CD8-positive, alpha-beta T cell (primary cell): ENCODE measurements at regions of chr15 and their contacts with region 1.

Region 1: GRCh38 chr15:23578521-23579150 is 13.2 kb downstream of the MKRN3 start:
- DNase-seq: no peak
- ATAC-seq: no peak
- H3K4me3 ChIP-seq: no peak overlapping the region
- H3K4me3 Mint-ChIP-seq: no peak overlapping the region
- H3K27ac ChIP-seq: no peak overlapping the region
- H3K27ac Mint-ChIP-seq: no peak overlapping the region
- H3K4me1 ChIP-seq: no peaks in the 10 kb centered on the region
- H3K4me1 Mint-ChIP-seq: no peaks in the 10 kb centered on the region
- H3K27me3 ChIP-seq: no peaks in the 10 kb centered on the region
- H3K27me3 Mint-ChIP-seq: no peaks in the 10 kb centered on the region
- CTCF ChIP-seq: no peak

Region 2: DNA sequence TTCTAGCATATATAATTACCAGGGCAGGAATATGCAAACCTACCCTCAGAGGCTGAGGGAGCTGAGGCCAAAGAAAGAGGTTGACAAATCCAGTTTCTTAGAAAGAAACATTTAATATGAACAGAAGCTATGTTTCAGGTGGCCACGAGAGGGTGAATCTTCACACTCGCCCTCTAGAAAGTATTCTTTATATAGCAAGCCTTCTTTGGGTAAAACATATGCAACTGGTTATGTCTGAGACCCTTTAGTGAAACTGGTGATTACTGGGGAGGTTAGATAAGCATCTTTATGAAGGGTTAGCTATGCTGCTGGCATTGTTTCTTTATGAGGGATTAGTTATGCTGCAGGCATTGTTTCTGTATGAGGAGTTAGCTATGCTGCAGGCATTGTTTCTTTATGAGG is 80.9 kb before region 1 on chr15:
- CTCF ChIA-PET with region 1: no interaction called
- POLR2A ChIA-PET with region 1: no interaction called
- intact Hi-C with region 1: no loop called
- DNase-seq: peak in 2 of 9 experiments; percentile 4 to 17
- ATAC-seq: no peak
- H3K4me3 ChIP-seq: no peak overlapping the region
- H3K4me3 Mint-ChIP-seq: no peak overlapping the region
- H3K27ac ChIP-seq: no peak overlapping the region
- H3K27ac Mint-ChIP-seq: no peak overlapping the region
- H3K4me1 ChIP-seq: no peaks in the 10 kb centered on the region
- H3K4me1 Mint-ChIP-seq: no peaks in the 10 kb centered on the region
- H3K27me3 ChIP-seq: no peaks in the 10 kb centered on the region
- H3K27me3 Mint-ChIP-seq: no peaks in the 10 kb centered on the region
- CTCF ChIP-seq: no peak

Region 3: DNA sequence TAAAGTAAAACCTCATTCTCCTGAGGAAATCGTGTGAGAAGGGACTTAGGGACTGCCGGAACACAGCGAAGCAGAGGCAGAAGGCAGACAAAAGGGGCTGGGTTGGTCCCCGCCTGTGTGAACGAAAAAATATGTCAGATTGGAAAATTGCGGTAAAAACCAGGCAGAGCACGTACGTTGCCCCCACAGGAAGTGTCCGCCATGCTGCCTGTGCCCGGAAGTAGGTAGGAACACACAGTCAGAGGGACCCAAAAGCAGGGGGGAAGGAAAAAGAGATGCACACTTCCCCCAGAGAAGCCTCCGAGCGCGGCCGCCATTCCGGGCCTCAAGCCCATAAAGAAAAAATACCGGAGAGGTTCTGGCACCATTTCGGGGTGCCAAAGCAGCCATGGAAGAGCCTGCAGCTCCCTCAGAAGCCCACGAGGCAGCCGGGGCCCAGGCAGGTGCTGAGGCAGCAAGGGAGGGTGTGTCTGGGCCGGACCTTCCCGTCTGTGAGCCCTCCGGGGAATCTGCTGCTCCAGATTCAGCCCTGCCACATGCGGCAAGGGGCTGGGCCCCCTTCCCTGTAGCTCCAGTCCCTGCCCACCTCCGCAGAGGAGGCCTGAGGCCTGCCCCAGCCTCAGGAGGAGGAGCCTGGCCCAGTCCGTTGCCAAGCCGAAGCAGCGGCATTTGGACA is 13.1 kb before region 1 on chr15 and contains the start of gene MKRN3:
- CTCF ChIA-PET with region 1: no interaction called
- POLR2A ChIA-PET with region 1: no interaction called
- intact Hi-C with region 1: loop called in 1 of 2 experiments (anchors 1 kb)
- DNase-seq: peak; percentile 6 to 73 (median 41)
- ATAC-seq: peak; percentile 65
- H3K4me3 ChIP-seq: peak within 1 kb of the TSS; percentile 41 to 51
- H3K4me3 Mint-ChIP-seq: peak within 1 kb of the TSS; percentile 80
- H3K27ac ChIP-seq: peak within 1 kb of the TSS; percentile 69 to 76
- H3K27ac Mint-ChIP-seq: peak within 1 kb of the TSS; percentile 79
- H3K4me1 ChIP-seq: no peaks in the 10 kb centered on the region
- H3K4me1 Mint-ChIP-seq: no peaks in the 10 kb centered on the region
- H3K27me3 ChIP-seq: no peaks in the 10 kb centered on the region
- H3K27me3 Mint-ChIP-seq: peaks cover 3% of the 10 kb centered on the region
- CTCF ChIP-seq: no peak
- total RNA-seq, gene MKRN3: 1.0 to 1.1 TPM